ENCODE measurements at regions of chr9 and their contacts with region 1.

Region 1: GRCh38 chr9:22211593-22212360 is 202.7 kb upstream of the CDKN2B start:
- DNase-seq: no peak
- H3K4me3 Mint-ChIP-seq: no peak overlapping the region
- H3K27ac Mint-ChIP-seq: no peak overlapping the region
- H3K4me1 Mint-ChIP-seq: peaks cover 38% of the 10 kb centered on the region
- H3K27me3 Mint-ChIP-seq: peaks cover 21% of the 10 kb centered on the region

Region 2: DNA sequence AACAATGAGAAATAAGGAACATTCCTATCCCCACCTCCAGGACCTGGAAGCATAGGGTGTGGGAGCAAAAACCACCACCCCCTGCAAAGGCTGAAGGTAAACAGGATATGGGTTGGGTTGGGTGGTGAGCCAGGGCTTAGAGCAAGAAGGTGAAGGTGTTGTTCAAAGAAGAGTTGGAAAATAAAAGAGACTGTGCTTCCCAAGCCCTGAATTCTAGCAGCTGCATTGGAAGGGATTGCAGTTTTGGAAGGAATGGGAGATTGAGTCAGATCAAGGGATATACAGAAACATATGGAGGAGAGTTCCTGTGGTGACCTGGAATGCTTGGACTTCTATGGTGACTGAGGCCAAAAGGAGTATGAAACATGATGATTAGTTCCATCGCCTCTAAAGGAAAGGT is 434.1 kb before region 1 on chr9:
- intact Hi-C with region 1: no loop called
- DNase-seq: no peak
- H3K4me3 Mint-ChIP-seq: no peak overlapping the region
- H3K27ac Mint-ChIP-seq: no peak overlapping the region
- H3K4me1 Mint-ChIP-seq: no peaks in the 10 kb centered on the region
- H3K27me3 Mint-ChIP-seq: peaks cover 11% of the 10 kb centered on the region

Region 3: GRCh38 chr9:21802195-21803000 is 409.4 kb before region 1 on chr9 and contains the start of gene MTAP:
- intact Hi-C with region 1: no loop called
- DNase-seq: peak; percentile 61
- H3K4me3 Mint-ChIP-seq: peak within 1 kb of the TSS; percentile 100
- H3K27ac Mint-ChIP-seq: peak within 1 kb of the TSS; percentile 100
- H3K4me1 Mint-ChIP-seq: peaks cover 43% of the 10 kb centered on the region
- H3K27me3 Mint-ChIP-seq: peaks cover 48% of the 10 kb centered on the region
- total RNA-seq, gene MTAP: 55.5 and 62.2 TPM in 2 replicates

Region 4: DNA sequence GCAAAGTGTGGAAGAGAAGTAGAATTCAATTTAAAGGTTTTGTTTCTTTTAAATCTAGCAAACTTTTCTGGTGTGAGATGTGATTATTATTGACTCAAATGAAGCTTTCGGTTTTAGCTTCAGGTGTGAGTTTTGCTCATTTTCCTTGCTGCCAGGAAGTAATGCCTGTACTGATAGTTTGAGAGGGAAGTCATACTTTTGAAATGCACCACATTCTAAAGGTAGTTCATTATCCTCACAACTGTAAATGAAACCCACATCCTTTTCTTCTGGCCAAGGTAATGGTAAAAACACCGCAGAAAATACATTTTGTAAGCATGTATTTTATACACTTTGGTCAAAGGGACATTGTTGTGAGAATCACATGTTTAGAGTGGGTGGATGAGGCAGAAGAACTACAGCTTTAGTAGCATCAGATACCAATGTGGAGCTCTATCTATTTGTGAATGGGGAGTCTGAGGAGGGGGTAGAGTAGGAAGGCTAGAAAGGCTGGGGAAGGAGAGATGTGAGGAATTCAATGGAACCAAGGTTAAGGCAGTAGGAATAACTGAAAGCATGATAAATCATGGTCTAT is 35.7 kb before region 1 on chr9:
- intact Hi-C with region 1: loop called (anchors 1 kb)
- DNase-seq: peak; percentile 5
- H3K4me3 Mint-ChIP-seq: peak overlapping the region; percentile 1
- H3K27ac Mint-ChIP-seq: peak overlapping the region; percentile 51
- H3K4me1 Mint-ChIP-seq: peaks cover 30% of the 10 kb centered on the region
- H3K27me3 Mint-ChIP-seq: peaks cover 10% of the 10 kb centered on the region

Region 5: DNA sequence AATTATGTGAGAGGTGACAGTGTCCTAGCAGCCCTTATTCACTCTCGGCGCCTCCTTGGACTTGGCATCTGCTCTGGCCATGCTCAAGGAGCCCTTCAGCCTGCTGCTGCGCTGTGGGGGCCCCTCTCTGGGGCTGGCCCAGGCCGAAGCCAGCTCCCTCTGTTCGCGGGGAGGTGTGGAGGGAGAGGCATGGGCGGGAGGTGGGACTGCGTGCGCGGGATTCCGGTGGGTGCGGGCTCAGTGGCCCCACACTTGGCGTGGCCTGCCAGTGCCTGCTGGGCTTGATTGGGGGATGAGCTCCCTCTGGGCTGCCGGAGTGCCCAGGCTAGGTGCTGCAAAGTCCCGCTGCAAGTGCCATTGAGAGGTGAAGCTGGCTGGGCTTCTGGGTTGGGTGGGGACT is 221.9 kb after region 1 on chr9:
- intact Hi-C with region 1: no loop called
- DNase-seq: no peak
- H3K4me3 Mint-ChIP-seq: no peak overlapping the region
- H3K27ac Mint-ChIP-seq: no peak overlapping the region
- H3K4me1 Mint-ChIP-seq: no peaks in the 10 kb centered on the region
- H3K27me3 Mint-ChIP-seq: no peaks in the 10 kb centered on the region